Panc1 (cell line): ENCODE measurements at regions of chr15 and their contacts with region 1.

Region 1: DNA sequence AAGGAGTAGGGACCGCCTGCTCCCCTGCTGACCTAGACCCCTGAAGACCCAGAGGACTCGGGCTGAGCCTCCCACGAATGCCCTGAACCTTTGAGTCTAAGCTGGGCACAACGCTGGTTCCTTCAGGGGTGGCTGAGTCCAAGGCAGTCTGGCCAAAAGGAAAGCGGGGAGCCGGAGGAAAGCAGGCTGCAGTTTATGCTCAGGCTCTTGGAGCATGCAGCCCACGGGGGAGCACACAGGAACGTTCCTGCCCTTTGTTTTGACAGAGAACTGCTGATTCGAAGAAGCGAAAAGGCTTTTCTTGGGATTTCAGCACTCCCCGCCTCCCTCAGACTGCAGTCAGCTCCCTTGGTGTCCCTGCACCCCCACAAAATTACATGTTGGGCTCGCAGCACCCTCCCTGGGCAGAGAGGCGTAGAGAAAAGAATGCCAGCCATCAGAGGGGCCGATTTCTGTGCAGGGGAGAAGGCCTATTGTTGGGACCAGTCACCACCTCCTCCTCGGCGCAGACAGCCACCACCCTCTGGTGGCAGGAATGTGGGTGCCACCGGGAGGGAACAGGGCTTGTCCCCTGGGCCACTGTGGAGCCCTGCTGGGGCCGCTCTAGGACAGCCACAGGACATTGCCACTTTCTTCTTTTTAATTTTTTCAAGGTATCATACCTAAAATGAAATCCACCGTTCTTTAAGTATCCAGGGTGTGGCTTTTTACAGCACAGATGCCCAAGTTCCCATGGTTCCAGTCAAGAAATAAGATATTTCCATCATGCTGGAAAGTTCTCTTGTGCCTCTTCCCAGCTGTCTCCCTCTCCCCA is 72.2 kb downstream of the SMAD6 start:
- DNase-seq: peak; percentile 66
- ATAC-seq: peak; percentile 89
- H3K4me3 ChIP-seq: peak overlapping the region in 1 of 2 experiments; percentile 15; a peak in 1 of 4 replicates
- H3K27ac ChIP-seq: peak overlapping the region; percentile 93
- H3K4me1 ChIP-seq: peaks cover 96% of the 10 kb centered on the region
- H3K27me3 ChIP-seq: no peaks in the 10 kb centered on the region
- CTCF ChIP-seq: peak; percentile 99

Region 2: DNA sequence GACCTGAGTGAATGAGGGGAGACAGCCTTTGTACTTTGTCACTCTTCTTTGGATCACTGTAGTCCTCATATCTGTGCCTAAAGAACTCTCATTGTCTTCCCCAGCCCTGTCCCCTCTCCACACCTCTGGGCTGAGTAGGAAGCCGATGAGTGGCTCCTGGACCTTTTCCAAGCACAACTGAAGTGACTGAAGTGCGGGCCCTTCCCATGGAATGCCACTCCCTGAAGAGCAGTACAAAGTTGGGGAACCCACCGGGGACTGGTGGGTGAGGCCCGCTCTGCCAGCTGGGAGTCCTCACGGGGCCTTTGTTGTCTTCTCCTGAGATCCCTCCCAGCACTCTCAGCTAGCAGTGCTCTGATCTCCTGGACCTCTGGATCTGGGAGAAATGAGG is 390.2 kb after region 1 on chr15:
- CTCF ChIA-PET with region 1: no interaction called
- POLR2A ChIA-PET with region 1: interaction called, 10 read pairs
- in situ Hi-C with region 1: no loop called
- intact Hi-C with region 1: no loop called
- DNase-seq: no peak
- ATAC-seq: peak; percentile 17
- H3K4me3 ChIP-seq: no peak overlapping the region
- H3K27ac ChIP-seq: peak overlapping the region; percentile 94
- H3K4me1 ChIP-seq: peaks cover 100% of the 10 kb centered on the region
- H3K27me3 ChIP-seq: no peaks in the 10 kb centered on the region
- CTCF ChIP-seq: no peak